Testis (tissue), 5 donors: ENCODE measurements at regions of chr2 and their contacts with region 1.

Region 1: GRCh38 chr2:70935468-70936164 is at the start of gene ATP6V1B1:
- DNase-seq: no peak
- H3K4me3 ChIP-seq: no peak within 1 kb of the TSS
- H3K27ac ChIP-seq: no peak within 1 kb of the TSS
- H3K4me1 ChIP-seq: no peaks in the 10 kb centered on the region
- H3K27me3 ChIP-seq: no peaks in the 10 kb centered on the region
- CTCF ChIP-seq: no peak
- POLR2A ChIP-seq: no peak
- total RNA-seq, gene ATP6V1B1: 1.7 to 2.9 TPM

Region 2: GRCh38 chr2:70871398-70872211 is 64.0 kb before region 1 on chr2:
- intact Hi-C with region 1: loop called (anchors 5 kb)
- DNase-seq: peak; percentile 88
- H3K4me3 ChIP-seq: peak overlapping the region in 1 of 2 donors; percentile 2
- H3K27ac ChIP-seq: no peak overlapping the region
- H3K4me1 ChIP-seq: peaks cover 6% of the 10 kb centered on the region
- H3K27me3 ChIP-seq: no peaks in the 10 kb centered on the region
- CTCF ChIP-seq: peak; percentile 70 to 85 (median 84)
- POLR2A ChIP-seq: no peak

Region 3: GRCh38 chr2:71269511-71270090 is 334.0 kb after region 1 on chr2:
- intact Hi-C with region 1: no loop called
- DNase-seq: no peak
- H3K4me3 ChIP-seq: no peak overlapping the region
- H3K27ac ChIP-seq: no peak overlapping the region
- H3K4me1 ChIP-seq: no peaks in the 10 kb centered on the region
- H3K27me3 ChIP-seq: no peaks in the 10 kb centered on the region
- CTCF ChIP-seq: no peak
- POLR2A ChIP-seq: no peak